RWPE1 (cell line): ENCODE measurements at regions of chr9 and their contacts with region 1.

Region 1: GRCh38 chr9:124040935-124041816 is 29.6 kb downstream of the LHX2 start:
- DNase-seq: no peak
- H3K27ac ChIP-seq: peak overlapping the region; percentile 61; the same call in 1 of the 2 replicates
- CTCF ChIP-seq: peak; percentile 96

Region 2: GRCh38 chr9:123472862-123473614 is 568.1 kb before region 1 on chr9:
- CTCF ChIA-PET with region 1: no interaction called
- POLR2A ChIA-PET with region 1: interaction called, 10 read pairs
- DNase-seq: no peak
- H3K27ac ChIP-seq: no peak overlapping the region
- CTCF ChIP-seq: no peak

Region 3: GRCh38 chr9:123724211-123724796 is 316.9 kb before region 1 on chr9:
- CTCF ChIA-PET with region 1: interaction called, 10 read pairs
- POLR2A ChIA-PET with region 1: no interaction called
- DNase-seq: no peak
- H3K27ac ChIP-seq: no peak overlapping the region
- CTCF ChIP-seq: no peak

Region 4: GRCh38 chr9:123952641-123953495 is 88.3 kb before region 1 on chr9:
- CTCF ChIA-PET with region 1: interaction called, 10 read pairs
- POLR2A ChIA-PET with region 1: no interaction called
- DNase-seq: no peak
- H3K27ac ChIP-seq: no peak overlapping the region
- CTCF ChIP-seq: no peak

Region 5: DNA sequence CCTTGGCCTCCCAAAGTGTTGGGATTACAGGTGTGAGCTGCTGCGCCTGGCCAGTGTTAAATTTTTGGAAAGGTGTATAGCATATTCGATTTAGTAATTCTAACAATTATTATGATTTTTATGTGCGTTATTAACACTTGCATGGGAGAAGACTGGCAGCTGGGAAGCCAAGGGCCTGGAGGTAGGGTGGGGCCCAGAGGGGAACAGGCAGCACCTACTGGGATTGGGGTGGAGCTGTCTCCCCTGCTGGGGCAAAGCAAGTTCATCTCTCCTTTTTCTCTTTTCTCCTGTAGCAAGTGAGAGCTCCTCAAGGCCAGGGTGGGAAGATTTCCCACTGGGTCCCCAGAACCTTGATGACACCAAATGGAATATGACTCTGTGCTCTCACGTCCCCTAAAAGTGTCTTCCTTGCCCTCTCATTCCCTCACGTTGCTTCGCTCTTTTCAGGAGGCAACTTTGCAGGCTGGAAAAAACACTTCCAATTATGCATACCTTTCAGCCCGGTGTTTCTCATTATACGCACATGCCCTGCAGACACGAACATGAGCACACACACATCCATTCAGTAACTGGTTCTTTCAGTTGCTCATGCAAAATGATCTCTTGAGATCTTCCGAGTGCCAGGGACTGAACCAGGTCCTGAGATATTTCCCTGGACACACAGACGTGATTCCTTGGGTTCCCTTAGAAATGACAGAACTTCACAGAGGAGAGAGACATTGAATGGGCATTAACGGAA is 52.7 kb before region 1 on chr9:
- CTCF ChIA-PET with region 1: no interaction called
- POLR2A ChIA-PET with region 1: no interaction called
- DNase-seq: no peak
- H3K27ac ChIP-seq: no peak overlapping the region
- CTCF ChIP-seq: no peak